GM12878 (cell line): ENCODE measurements at regions of chr16 and their contacts with region 1.

Region 1: GRCh38 chr16:2422123-2422867 is 7.0 kb upstream of the CCNF start:
- DNase-seq: no peak
- ATAC-seq: peak; percentile 81
- H3K4me3 ChIP-seq: no peak overlapping the region
- H3K27ac ChIP-seq: no peak overlapping the region
- H3K4me1 ChIP-seq: no peaks in the 10 kb centered on the region
- H3K27me3 ChIP-seq: no peaks in the 10 kb centered on the region
- CTCF ChIP-seq: no peak
- EP300 ChIP-seq: no peak
- POLR2A ChIP-seq: no peak
- RAD21 ChIP-seq: no peak

Region 2: DNA sequence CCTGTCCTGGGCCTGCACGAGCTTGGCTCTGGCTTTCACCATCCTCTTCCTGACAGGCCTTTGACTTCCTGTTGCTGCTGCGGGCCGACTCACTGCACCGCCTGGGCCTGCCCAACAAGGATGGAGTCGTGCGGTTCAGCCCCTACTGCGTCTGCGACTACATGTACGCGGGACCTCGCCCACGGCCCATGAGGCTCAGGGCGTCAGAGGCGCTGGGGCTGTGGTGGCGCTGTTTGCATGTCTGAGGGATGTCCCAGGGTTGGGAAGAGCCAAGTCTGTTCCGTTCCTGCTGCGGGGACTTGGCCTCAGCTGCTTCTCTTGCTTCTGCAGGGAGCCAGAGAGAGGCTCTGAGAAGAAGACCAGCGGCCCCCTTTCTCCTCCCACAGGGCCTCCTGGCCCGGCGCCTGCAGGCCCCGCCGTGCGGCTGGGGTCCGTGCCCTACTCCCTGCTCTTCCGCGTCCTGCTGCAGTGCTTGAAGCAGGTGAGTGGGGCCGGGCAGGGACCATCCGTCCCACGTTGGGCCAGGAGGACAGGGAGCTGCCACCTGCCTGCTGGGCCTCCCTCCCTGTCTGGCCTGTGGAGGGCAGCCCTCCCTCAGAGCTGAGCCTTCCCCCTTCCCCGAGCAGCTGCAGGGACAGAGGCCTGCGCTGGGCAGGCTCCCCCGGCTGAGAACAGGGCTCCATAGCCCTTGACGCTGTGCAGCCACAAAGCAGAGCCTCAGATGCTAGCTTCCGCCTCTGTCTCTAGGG is 350.7 kb before region 1 on chr16:
- CTCF ChIA-PET with region 1: no interaction called
- POLR2A ChIA-PET with region 1: no interaction called
- RAD21 ChIA-PET with region 1: no interaction called
- SMC1A ChIA-PET with region 1: no interaction called
- in situ Hi-C with region 1: no loop called
- intact Hi-C with region 1: no loop called
- DNase-seq: no peak
- ATAC-seq: no peak; the same call in 2 of the 3 replicates
- H3K4me3 ChIP-seq: no peak overlapping the region
- H3K27ac ChIP-seq: no peak overlapping the region
- H3K4me1 ChIP-seq: no peaks in the 10 kb centered on the region
- H3K27me3 ChIP-seq: no peaks in the 10 kb centered on the region
- CTCF ChIP-seq: no peak
- EP300 ChIP-seq: no peak
- POLR2A ChIP-seq: no peak
- RAD21 ChIP-seq: no peak

Region 3: DNA sequence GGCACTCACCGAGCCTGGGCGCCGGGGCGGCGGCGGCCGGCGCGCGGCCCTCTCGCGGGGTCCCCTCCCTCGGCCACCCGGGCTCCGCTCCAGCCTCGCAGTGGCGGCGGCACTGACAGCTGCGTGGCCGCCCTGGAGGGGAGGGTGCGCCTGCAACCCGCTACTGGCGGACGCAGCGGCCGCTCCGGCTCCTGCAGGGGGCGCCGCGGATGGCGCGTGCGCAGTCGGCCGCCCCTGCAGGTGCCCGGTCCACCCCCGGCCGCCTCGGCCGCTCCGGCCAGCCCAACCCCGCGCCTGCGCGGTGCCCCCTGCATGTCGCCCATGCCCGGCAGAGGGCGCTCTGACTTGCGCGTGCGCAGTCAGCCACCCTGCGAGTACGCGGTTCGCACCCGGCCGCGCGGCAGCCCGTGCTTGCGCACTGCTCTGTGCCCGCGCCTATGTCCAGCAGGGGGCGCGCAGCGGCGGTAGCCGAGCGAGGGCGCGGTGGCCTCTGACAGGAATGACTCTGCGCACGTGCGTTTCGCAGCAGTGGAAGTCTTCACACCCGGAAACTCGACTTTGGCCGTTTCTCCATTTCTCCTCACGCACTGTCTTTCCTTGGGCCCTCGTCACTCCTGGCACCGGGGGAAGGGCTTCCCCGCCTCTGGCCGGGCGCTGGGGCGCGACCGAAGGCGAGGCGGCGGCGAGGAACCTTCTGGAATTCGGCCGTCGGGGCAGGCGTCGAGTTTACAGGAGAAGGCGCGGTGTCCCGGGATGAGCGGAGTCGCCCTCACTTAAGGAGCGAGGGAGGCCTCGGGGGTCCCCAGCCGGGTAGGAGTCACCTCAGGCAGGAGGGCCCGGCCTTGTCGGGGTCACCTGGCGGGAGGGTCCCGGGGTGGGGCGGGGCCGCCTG is 81.5 kb before region 1 on chr16 and contains the start of gene ABCA3:
- CTCF ChIA-PET with region 1: interaction called, 6 read pairs
- POLR2A ChIA-PET with region 1: interaction called, 4 read pairs
- RAD21 ChIA-PET with region 1: no interaction called
- SMC1A ChIA-PET with region 1: no interaction called
- in situ Hi-C with region 1: no loop called
- intact Hi-C with region 1: loop called (anchors 2 kb)
- DNase-seq: peak; percentile 79
- ATAC-seq: peak; percentile 94
- H3K4me3 ChIP-seq: peak within 1 kb of the TSS; percentile 94
- H3K27ac ChIP-seq: peak within 1 kb of the TSS; percentile 31
- H3K4me1 ChIP-seq: peaks cover 3% of the 10 kb centered on the region; the same call in 1 of the 2 replicates
- H3K27me3 ChIP-seq: no peaks in the 10 kb centered on the region
- CTCF ChIP-seq: peak; percentile 92 to 100 (median 94)
- EP300 ChIP-seq: 0 out of 4 replicates have a peak, but pooled peaks of 1 of the 2 experiments have one; percentile 21
- POLR2A ChIP-seq: peak; percentile 57; the same call in 1 of the 2 replicates
- RAD21 ChIP-seq: peak; percentile 62
- polyA plus RNA-seq, gene ABCA3: 0.71 to 1.3 TPM